ENCODE measurements at regions of chr2 and their contacts with region 1.

Region 1: DNA sequence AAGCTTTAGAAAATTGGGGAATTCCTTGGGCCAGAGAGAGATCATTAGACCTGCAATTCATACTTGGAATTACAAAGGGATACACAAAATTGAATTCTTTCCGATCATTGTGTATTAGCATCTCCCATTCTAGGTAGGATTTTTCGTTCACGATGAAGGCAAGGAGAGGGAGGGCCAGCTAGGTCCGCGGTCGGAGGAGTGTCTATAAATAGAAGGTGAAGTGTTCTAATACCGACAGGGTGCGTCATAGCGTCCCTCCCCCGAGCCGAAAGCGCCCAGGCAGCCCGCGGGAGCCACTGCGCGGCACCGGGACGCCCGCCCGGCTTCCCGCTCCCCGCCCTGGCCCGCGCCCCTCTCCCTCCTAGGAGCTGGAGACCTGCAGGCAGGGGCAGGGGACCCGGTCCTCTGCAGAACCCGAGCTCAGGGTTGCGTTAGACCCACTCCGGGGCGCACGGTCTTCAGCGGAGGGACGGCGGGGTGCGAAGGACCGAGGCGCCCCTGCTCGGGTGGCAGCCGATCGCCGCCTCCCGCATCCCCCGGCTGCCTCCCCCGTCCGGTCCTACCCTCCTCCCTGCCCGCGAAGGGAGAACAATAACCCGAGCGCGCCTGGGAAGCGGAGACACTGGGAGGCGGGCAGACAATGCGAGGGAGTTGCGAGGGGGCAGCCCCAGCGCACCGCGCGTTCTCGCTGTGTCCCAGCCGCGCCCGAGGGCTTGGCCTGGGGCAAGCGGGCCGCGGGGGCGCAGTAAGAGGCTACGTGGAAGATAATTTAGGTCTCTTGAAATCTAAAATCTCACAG is 114.2 kb upstream of the SERTAD2 start:
- DNase-seq: peak; percentile 84 to 89
- H3K4me3 ChIP-seq: peak overlapping the region; percentile 66
- H3K27ac ChIP-seq: peak overlapping the region; percentile 84
- H3K4me1 ChIP-seq: peaks cover 45% of the 10 kb centered on the region
- H3K27me3 ChIP-seq: no peaks in the 10 kb centered on the region
- CTCF ChIP-seq: no peak

Region 2: DNA sequence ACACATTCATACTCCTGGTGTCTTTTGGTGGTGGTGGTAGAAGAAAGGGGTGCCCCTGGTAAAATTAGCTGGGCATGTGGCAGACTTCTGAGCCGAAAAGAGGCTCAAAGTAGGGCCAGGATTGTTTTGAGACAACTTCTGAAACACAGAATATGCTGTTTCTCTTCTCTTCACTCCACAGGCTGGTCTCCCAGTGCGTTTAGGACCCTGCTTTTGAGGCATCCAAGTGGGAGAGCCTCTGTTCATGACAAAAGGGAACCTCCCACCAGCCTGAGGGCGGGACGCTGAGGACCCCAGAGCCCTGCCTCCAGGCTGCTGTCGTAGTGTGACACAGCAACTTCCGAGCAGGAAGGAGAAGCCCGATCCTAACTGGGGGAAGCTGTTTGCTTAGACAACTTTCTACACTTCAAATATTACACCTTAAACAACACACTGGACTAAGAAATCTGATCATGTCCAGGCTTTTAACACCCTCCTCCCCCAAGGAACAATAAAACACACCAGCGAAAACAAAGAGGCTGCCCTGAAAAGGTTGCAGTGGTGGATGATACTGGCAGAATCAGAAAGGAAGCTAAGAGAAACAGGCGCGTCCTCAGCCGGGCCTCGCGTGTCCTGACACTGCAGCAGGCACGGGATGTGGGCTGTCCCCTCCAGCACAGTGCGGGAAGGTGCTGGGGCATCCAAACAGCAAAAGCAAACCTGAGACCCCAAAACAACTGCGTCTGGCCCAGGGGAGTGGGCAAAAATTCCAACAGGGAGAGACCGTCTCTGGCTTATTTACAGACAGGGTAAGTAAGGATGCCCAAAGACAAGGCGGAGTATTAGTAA is 123.5 kb before region 1 on chr2:
- CTCF ChIA-PET with region 1: interaction called, 5 read pairs
- POLR2A ChIA-PET with region 1: no interaction called
- intact Hi-C with region 1: loop called (anchors 1 kb)
- DNase-seq: peak; percentile 83 to 85
- H3K4me3 ChIP-seq: peak overlapping the region; percentile 60
- H3K27ac ChIP-seq: peak overlapping the region; percentile 97
- H3K4me1 ChIP-seq: peaks cover 78% of the 10 kb centered on the region
- H3K27me3 ChIP-seq: no peaks in the 10 kb centered on the region
- CTCF ChIP-seq: no peak

Region 3: DNA sequence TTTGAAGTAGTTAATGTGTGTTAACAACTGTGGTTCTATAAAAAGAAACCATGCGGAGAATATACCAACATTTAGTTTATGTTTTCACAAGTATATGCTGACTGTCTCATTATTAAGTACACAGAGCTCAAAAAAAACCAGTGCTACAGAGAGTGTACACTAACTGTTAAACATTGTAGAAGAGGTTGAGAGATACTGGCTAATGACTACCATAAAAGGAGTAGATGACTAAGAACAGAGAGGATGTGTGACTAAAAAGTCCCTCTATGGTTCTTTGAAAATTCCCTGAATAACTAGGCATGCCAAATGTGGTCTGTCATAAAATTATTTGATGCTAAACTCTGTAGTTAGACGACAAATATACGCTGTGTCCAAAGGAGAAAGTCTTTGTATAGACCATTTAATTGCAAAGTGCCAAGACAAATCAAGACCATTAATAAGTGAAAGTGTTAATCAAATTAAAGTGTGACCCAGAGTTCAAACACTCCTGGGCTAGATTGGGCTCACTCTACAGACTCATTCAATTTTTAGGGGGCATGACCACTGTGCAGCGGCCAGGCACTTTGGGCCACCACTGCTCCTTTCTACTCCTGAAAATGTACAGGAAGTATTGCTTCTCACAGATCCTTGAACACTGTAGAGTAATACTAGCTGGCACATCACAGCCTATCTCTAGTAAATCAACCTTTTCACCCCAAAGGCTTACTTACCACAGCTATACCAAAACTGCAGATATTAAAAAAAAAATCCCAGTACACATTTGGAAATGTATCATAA is 69.0 kb before region 1 on chr2:
- CTCF ChIA-PET with region 1: no interaction called
- POLR2A ChIA-PET with region 1: interaction called, 10 read pairs
- intact Hi-C with region 1: no loop called
- DNase-seq: peak in 1 of 2 experiments; percentile 41
- H3K4me3 ChIP-seq: no peak overlapping the region
- H3K27ac ChIP-seq: peak overlapping the region; percentile 4; the same call in 1 of the 2 replicates
- H3K4me1 ChIP-seq: peaks cover 10% of the 10 kb centered on the region
- H3K27me3 ChIP-seq: no peaks in the 10 kb centered on the region
- CTCF ChIP-seq: no peak

Region 4: DNA sequence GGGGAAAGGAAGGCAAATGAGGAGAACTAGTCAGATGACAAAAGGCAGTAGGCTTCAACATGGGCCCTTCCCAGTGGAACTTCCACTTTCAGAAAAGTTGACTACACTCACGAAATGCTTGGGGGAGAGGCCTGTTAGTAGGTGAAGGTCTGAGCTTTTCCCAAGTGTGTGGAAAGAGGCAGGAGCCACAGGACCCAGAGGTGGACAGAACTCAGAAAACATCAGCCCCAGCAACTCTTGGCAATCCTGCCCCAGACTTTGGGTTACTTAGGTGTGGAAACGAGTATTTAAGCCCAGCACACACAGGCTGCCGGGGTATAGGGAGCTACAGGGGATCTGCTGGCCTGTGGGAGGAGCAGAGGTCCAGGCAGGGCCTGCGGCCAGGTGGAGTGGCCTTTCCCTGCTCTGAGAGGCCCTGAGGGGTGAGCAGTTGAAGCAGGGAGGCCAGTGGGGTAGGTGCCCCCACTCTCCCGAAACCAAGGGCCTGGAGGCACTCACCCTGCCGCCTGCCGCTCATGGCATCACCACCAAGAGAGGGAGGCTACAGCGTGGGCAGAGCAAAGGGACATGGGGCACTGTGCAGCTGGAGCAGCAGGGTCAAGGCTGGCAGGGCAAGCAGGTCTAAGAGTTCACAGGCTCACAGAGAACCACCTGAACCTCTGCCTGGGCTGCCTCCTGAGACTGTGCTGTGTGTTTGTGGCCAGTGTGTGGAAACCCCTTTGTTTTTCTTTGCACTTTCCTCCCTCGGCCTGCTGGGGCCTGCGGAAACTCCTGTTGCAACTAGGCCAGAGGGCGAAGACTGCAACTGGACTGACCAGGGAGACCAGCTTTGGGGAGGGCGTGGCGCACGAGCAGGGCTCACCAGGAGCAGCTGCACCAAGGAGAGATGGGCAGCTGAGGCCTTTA is 16.6 kb after region 1 on chr2:
- CTCF ChIA-PET with region 1: interaction called, 20 read pairs
- POLR2A ChIA-PET with region 1: interaction called, 6 read pairs
- intact Hi-C with region 1: loop called (anchors 1 kb)
- DNase-seq: peak; percentile 90 to 95
- H3K4me3 ChIP-seq: peak overlapping the region; percentile 33; the same call in 1 of the 2 replicates
- H3K27ac ChIP-seq: peak overlapping the region; percentile 93
- H3K4me1 ChIP-seq: peaks cover 96% of the 10 kb centered on the region
- H3K27me3 ChIP-seq: no peaks in the 10 kb centered on the region
- CTCF ChIP-seq: no peak

Region 5: GRCh38 chr2:64819774-64820696 is 52.2 kb after region 1 on chr2:
- CTCF ChIA-PET with region 1: no interaction called
- POLR2A ChIA-PET with region 1: no interaction called
- intact Hi-C with region 1: no loop called
- DNase-seq: no peak
- H3K4me3 ChIP-seq: no peak overlapping the region
- H3K27ac ChIP-seq: no peak overlapping the region
- H3K4me1 ChIP-seq: peaks cover 43% of the 10 kb centered on the region
- H3K27me3 ChIP-seq: no peaks in the 10 kb centered on the region
- CTCF ChIP-seq: no peak

Region 6: GRCh38 chr2:64831134-64831976 is 63.5 kb after region 1 on chr2:
- CTCF ChIA-PET with region 1: no interaction called
- POLR2A ChIA-PET with region 1: no interaction called
- intact Hi-C with region 1: loop called (anchors 1 kb)
- DNase-seq: peak; percentile 99 to 100
- H3K4me3 ChIP-seq: peak overlapping the region; percentile 36; the same call in 1 of the 2 replicates
- H3K27ac ChIP-seq: peak overlapping the region; percentile 83
- H3K4me1 ChIP-seq: peaks cover 53% of the 10 kb centered on the region
- H3K27me3 ChIP-seq: no peaks in the 10 kb centered on the region
- CTCF ChIP-seq: peak; percentile 99

Region 7: GRCh38 chr2:64876137-64876647 is 108.3 kb after region 1 on chr2:
- CTCF ChIA-PET with region 1: no interaction called
- POLR2A ChIA-PET with region 1: no interaction called
- intact Hi-C with region 1: no loop called
- DNase-seq: peak; percentile 72 to 84
- H3K4me3 ChIP-seq: no peak overlapping the region
- H3K27ac ChIP-seq: peak overlapping the region; percentile 53
- H3K4me1 ChIP-seq: peaks cover 26% of the 10 kb centered on the region
- H3K27me3 ChIP-seq: no peaks in the 10 kb centered on the region
- CTCF ChIP-seq: no peak